Activated B cell treated with CpG ODN at 0.5 μM for 24 hours (primary cell): ENCODE measurements at regions of chr11 and their contacts with region 1.

Region 1: GRCh38 chr11:74398244-74399159 is at the start of gene PGM2L1:
- DNase-seq: peak; percentile 88
- ATAC-seq: peak; percentile 87
- H3K4me3 Mint-ChIP-seq: peak within 1 kb of the TSS; percentile 100
- H3K27ac Mint-ChIP-seq: peak within 1 kb of the TSS; percentile 97
- H3K4me1 Mint-ChIP-seq: peaks cover 7% of the 10 kb centered on the region
- H3K27me3 Mint-ChIP-seq: no peaks in the 10 kb centered on the region
- CTCF ChIP-seq: no peak
- total RNA-seq, gene PGM2L1: 3.5 and 3.8 TPM in 2 replicates

Region 2: DNA sequence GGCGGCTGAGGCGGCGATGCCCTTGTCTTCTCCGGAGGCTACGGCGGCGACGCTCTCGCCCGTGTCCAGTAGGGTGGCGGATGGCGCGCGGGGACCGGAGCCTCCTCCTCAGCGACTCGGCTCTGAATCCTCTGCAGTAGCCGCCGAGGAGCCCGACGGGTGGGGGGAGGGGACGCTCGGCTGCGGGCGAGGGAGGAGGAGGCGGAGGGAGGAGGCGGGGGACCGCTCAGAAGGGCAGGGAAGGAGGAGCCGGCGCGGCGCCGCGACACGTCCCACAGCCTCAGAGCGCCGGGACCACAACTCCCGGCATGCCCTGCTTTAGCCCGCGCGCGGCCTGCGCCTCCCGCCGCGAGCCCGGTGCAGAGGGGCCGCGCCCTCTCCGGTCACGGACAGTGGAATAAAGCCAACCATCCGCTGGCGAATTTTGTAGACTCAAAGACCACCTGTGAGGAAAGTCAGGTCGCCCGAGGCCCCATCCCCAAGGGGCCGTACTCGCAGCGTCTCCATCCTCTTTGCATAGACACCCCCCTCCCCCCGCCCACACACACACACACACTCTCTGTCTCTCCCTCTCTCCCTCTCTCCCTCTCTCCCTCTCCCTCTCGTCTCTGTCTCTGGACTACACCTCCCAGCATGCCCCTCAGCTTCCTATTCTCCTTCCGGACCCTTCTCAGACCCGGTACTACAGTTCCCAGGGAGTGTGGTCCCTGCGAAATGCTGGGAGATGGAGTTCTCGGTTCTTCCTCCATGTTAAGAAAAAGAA is 800.4 kb before region 1 on chr11 and contains the start of gene FAM168A:
- CTCF ChIA-PET with region 1: no interaction called
- POLR2A ChIA-PET with region 1: no interaction called
- intact Hi-C with region 1: loop called (anchors 5 kb)
- DNase-seq: peak; percentile 81
- ATAC-seq: peak; percentile 93
- H3K4me3 Mint-ChIP-seq: peak within 1 kb of the TSS; percentile 92
- H3K27ac Mint-ChIP-seq: peak within 1 kb of the TSS; percentile 88
- H3K4me1 Mint-ChIP-seq: peaks cover 26% of the 10 kb centered on the region
- H3K27me3 Mint-ChIP-seq: no peaks in the 10 kb centered on the region
- CTCF ChIP-seq: no peak
- total RNA-seq, gene FAM168A: 14.1 and 16.5 TPM in 2 replicates

Region 3: GRCh38 chr11:73743045-73743444 is 655.5 kb before region 1 on chr11:
- CTCF ChIA-PET with region 1: no interaction called
- POLR2A ChIA-PET with region 1: no interaction called
- intact Hi-C with region 1: no loop called
- DNase-seq: no peak
- ATAC-seq: no peak
- H3K4me3 Mint-ChIP-seq: no peak overlapping the region
- H3K27ac Mint-ChIP-seq: no peak overlapping the region
- H3K4me1 Mint-ChIP-seq: peaks cover 10% of the 10 kb centered on the region
- H3K27me3 Mint-ChIP-seq: no peaks in the 10 kb centered on the region
- CTCF ChIP-seq: no peak

Region 4: DNA sequence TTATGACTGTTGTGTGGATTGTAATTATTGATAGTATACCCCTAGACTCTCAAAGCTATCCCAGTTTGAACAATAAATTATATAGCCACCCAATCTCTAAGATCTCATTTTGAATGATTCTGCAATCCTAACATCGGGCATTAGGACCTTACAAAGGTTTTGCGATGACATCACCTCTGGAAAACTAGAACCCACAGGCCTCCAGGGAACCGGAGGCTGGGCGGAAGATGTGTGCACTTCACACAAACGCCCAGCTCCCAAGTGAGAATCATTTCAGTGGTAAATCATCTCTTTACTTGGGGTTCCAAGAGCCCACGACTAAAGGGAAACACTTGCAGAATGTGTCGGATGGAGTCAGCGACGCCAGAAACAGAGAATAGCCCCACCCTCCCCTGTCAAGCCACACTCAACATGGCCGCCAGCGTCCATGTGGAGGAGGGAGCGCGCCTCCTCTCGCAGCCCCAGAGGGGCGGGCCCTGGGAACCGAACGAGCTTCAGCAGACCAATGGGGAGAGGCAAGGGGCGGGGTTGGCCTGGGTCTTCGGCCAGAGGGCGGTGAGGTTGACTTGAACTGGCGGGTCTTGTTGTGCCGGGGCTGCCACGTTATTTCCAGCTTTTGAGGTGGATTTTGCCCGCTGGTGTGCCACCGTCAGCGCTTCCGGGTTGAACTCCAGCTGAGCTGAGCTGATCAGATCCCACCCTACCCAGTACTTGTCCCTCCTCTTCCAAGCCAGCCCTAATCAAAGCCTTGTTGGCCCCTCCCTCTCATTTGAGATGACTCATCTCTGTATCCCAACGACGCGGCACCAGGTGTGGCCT is 619.2 kb before region 1 on chr11:
- CTCF ChIA-PET with region 1: no interaction called
- POLR2A ChIA-PET with region 1: no interaction called
- intact Hi-C with region 1: loop called (anchors 2 kb)
- DNase-seq: peak; percentile 94
- ATAC-seq: peak; percentile 99
- H3K4me3 Mint-ChIP-seq: peak overlapping the region; percentile 94
- H3K27ac Mint-ChIP-seq: peak overlapping the region; percentile 98
- H3K4me1 Mint-ChIP-seq: peaks cover 8% of the 10 kb centered on the region
- H3K27me3 Mint-ChIP-seq: peaks cover 2% of the 10 kb centered on the region
- CTCF ChIP-seq: no peak

Region 5: DNA sequence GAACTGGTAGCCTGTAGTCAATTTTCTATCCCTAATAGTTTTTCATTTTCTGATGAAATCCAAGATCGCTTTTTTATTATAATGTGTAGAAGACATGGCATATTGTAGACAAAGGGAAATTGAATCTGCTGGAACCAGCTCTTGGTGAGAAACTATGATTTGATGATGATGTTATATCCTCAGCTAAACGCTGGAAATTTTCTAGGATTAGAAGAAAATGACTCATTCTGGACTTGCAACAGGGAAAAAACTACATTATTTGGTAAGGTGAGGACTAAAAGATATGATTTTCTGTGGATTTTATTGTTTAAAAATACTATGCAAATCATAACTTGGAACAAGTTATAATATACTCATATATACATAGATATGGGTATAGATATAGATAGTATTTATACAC is 13.8 kb after region 1 on chr11:
- CTCF ChIA-PET with region 1: no interaction called
- POLR2A ChIA-PET with region 1: no interaction called
- intact Hi-C with region 1: no loop called
- DNase-seq: no peak
- ATAC-seq: no peak
- H3K4me3 Mint-ChIP-seq: no peak overlapping the region
- H3K27ac Mint-ChIP-seq: no peak overlapping the region
- H3K4me1 Mint-ChIP-seq: no peaks in the 10 kb centered on the region
- H3K27me3 Mint-ChIP-seq: peaks cover 11% of the 10 kb centered on the region
- CTCF ChIP-seq: no peak

Region 6: DNA sequence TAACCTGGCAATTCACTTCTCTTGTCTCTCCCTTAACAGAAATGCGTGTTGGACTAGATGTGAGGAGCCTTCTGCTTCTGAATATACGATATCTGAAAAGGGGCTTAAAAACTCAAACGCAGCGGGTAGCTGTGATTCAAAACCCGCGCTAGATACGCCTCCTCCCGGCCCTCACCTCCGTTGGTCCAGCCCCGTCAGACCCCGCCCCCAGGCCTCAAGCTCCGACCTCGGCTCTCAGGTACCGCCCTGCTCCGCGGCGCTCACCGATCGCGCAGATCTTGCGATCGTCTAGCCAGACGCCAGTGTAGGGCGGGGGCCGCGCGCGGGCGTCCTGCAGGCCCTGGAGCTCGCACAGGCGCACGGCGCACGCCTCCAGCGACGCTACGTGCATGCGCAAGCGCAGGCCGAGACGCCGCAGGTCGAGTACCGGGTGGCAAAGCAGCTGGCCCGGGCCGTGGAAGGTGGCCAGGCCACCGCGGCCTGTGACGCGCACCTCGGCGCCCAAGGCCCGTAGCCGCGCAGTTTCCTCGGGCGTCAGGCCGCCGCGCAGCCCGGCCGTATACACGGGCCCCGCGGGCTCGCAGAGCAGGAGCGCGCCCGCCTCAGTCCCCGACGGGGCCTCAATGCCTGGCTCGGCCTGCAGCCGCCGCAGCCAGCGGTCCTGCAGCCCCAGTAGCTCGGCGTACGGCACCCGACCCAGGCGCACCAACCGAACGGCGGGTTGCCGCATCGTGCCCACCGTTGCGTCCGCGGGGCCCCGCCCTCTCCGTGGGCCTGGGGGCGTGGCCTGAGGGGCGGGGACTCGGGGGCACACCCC is 94.7 kb after region 1 on chr11 and contains the start of gene LIPT2:
- CTCF ChIA-PET with region 1: interaction called, 4 read pairs
- POLR2A ChIA-PET with region 1: interaction called, 22 read pairs
- intact Hi-C with region 1: loop called (anchors 1 kb)
- DNase-seq: peak; percentile 94
- ATAC-seq: peak; percentile 95
- H3K4me3 Mint-ChIP-seq: peak within 1 kb of the TSS; percentile 85
- H3K27ac Mint-ChIP-seq: peak within 1 kb of the TSS; percentile 85
- H3K4me1 Mint-ChIP-seq: peaks cover 19% of the 10 kb centered on the region
- H3K27me3 Mint-ChIP-seq: no peaks in the 10 kb centered on the region
- CTCF ChIP-seq: no peak
- total RNA-seq, gene LIPT2: 4.1 and 5.4 TPM in 2 replicates

Region 7: GRCh38 chr11:74602637-74603556 is 204.4 kb after region 1 on chr11:
- CTCF ChIA-PET with region 1: no interaction called
- POLR2A ChIA-PET with region 1: no interaction called
- intact Hi-C with region 1: no loop called
- DNase-seq: no peak
- ATAC-seq: no peak
- H3K4me3 Mint-ChIP-seq: no peak overlapping the region
- H3K27ac Mint-ChIP-seq: no peak overlapping the region
- H3K4me1 Mint-ChIP-seq: peaks cover 4% of the 10 kb centered on the region
- H3K27me3 Mint-ChIP-seq: no peaks in the 10 kb centered on the region
- CTCF ChIP-seq: no peak

Region 8: GRCh38 chr11:74748211-74749127 is 350.0 kb after region 1 on chr11 and contains the start of gene RNF169:
- CTCF ChIA-PET with region 1: no interaction called
- POLR2A ChIA-PET with region 1: interaction called, 3 read pairs
- intact Hi-C with region 1: loop called (anchors 5 kb)
- DNase-seq: peak; percentile 82
- ATAC-seq: peak; percentile 98
- H3K4me3 Mint-ChIP-seq: peak within 1 kb of the TSS; percentile 90
- H3K27ac Mint-ChIP-seq: peak within 1 kb of the TSS; percentile 95
- H3K4me1 Mint-ChIP-seq: peaks cover 32% of the 10 kb centered on the region
- H3K27me3 Mint-ChIP-seq: no peaks in the 10 kb centered on the region
- CTCF ChIP-seq: no peak
- total RNA-seq, gene RNF169: 20.4 and 22.2 TPM in 2 replicates

Region 9: GRCh38 chr11:75399344-75400145 is 1001.0 kb after region 1 on chr11 and contains the start of gene RPS3:
- CTCF ChIA-PET with region 1: no interaction called
- POLR2A ChIA-PET with region 1: no interaction called
- intact Hi-C with region 1: loop called (anchors 10 kb)
- DNase-seq: peak; percentile 83
- ATAC-seq: peak; percentile 91
- H3K4me3 Mint-ChIP-seq: peak within 1 kb of the TSS; percentile 99
- H3K27ac Mint-ChIP-seq: peak within 1 kb of the TSS; percentile 98
- H3K4me1 Mint-ChIP-seq: peaks cover 49% of the 10 kb centered on the region
- H3K27me3 Mint-ChIP-seq: peaks cover 5% of the 10 kb centered on the region
- CTCF ChIP-seq: no peak
- total RNA-seq, gene RPS3: 4,635 and 5,236 TPM in 2 replicates